HepG2 (cell line): ENCODE measurements at regions of chr15 and their contacts with region 1.

Region 1: DNA sequence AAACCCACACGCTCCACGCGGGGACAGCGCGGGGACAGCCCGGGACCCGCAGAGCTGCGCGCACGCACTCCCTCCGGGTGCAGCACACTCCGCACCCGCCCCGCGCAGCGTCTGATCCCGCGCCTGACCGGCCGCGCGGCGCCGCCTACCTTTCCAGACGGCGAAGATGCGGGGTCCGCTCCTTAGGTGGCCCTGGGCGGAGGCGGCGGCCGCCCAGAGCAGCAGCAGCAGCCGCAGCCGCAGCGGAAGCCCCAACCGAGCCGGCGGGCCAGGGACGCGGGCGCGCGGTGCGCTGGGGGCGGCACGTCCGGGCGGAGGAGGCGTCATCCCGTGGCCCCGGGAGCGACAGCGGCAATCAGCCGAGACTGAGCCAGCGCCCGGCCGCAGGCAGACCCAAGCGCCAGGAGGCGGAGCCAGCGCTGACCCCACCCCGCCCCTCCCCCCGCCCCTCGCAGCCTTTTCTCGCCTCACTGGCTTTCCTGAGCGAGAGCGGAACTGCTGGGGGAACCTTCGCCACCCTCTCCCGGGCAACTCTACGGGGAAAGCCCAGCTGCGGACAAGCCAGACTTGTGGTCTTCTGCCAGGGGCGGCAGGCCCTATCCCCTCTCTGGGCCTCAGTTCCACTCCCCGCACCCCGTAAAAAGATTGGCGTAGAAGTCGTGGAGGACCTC is at the start of gene SEMA7A:
- DNase-seq: peak; percentile 64
- ATAC-seq: peak; percentile 82
- H3K4me3 ChIP-seq: peak within 1 kb of the TSS; percentile 80 to 95 (median 87)
- H3K27ac ChIP-seq: peak within 1 kb of the TSS; percentile 66
- H3K4me1 ChIP-seq: peaks cover 67% of the 10 kb centered on the region
- H3K27me3 ChIP-seq: no peaks in the 10 kb centered on the region
- CTCF ChIP-seq: peak; percentile 10; the same call in 1 of the 2 replicates
- EP300 ChIP-seq: no peak
- POLR2A ChIP-seq: peak; percentile 78 to 96
- RAD21 ChIP-seq: peak; percentile 47
- total RNA-seq, gene SEMA7A: 7.1 and 15.8 TPM in 2 replicates

Region 2: GRCh38 chr15:74382004-74382816 is 51.5 kb before region 1 on chr15:
- CTCF ChIA-PET with region 1: interaction called, 77 read pairs
- POLR2A ChIA-PET with region 1: interaction called, 124 read pairs
- in situ Hi-C with region 1: loop called (anchors 5 kb)
- intact Hi-C with region 1: loop called (anchors 1 kb)
- DNase-seq: peak; percentile 74
- ATAC-seq: peak; percentile 92
- H3K4me3 ChIP-seq: peak overlapping the region in 2 of 3 experiments; percentile 26 to 53; a peak in 2 of 6 replicates
- H3K27ac ChIP-seq: no peak overlapping the region
- H3K4me1 ChIP-seq: peaks cover 66% of the 10 kb centered on the region
- H3K27me3 ChIP-seq: peaks cover 0 to 19% of the 10 kb centered on the region in 2 experiments; a peak in 3 of 5 replicates
- CTCF ChIP-seq: peak; percentile 98
- EP300 ChIP-seq: no peak
- POLR2A ChIP-seq: no peak
- RAD21 ChIP-seq: peak; percentile 99

Region 3: GRCh38 chr15:74396445-74397238 is 37.1 kb before region 1 on chr15:
- CTCF ChIA-PET with region 1: no interaction called
- POLR2A ChIA-PET with region 1: interaction called, 10 read pairs
- in situ Hi-C with region 1: no loop called
- intact Hi-C with region 1: no loop called
- DNase-seq: peak; percentile 84
- ATAC-seq: peak; percentile 65
- H3K4me3 ChIP-seq: peak overlapping the region in 1 of 3 experiments; percentile 34; a peak in 1 of 6 replicates
- H3K27ac ChIP-seq: no peak overlapping the region
- H3K4me1 ChIP-seq: peaks cover 52% of the 10 kb centered on the region
- H3K27me3 ChIP-seq: peaks cover 5 to 55% of the 10 kb centered on the region in 2 experiments; a peak in 3 of 5 replicates
- CTCF ChIP-seq: peak; percentile 44
- EP300 ChIP-seq: peak in 1 of 2 experiments; percentile 44; a peak in 1 of 4 replicates
- POLR2A ChIP-seq: no peak
- RAD21 ChIP-seq: no peak

Region 4: GRCh38 chr15:74422650-74423430 is 10.9 kb before region 1 on chr15:
- CTCF ChIA-PET with region 1: no interaction called
- POLR2A ChIA-PET with region 1: interaction called, 107 read pairs
- in situ Hi-C with region 1: no loop called
- intact Hi-C with region 1: no loop called
- DNase-seq: peak; percentile 82
- ATAC-seq: peak; percentile 68
- H3K4me3 ChIP-seq: peak overlapping the region in 1 of 3 experiments; percentile 30; a peak in 2 of 6 replicates
- H3K27ac ChIP-seq: peak overlapping the region; percentile 74
- H3K4me1 ChIP-seq: peaks cover 98% of the 10 kb centered on the region
- H3K27me3 ChIP-seq: no peaks in the 10 kb centered on the region
- CTCF ChIP-seq: 0 out of 2 replicates have a peak, but pooled peaks have one; percentile 9
- EP300 ChIP-seq: peak in 1 of 2 experiments; percentile 23; a peak in 1 of 4 replicates
- POLR2A ChIP-seq: no peak
- RAD21 ChIP-seq: no peak; the same call in 1 of the 2 replicates